Activated naive CD8-positive, alpha-beta T cell treated with anti-CD3 and anti-CD28 coated beads, Interleukin-2, amount 10 ng/mL, durations not matched to agents 7 days and 5 days (primary cell): ENCODE measurements at regions of chr12 and their contacts with region 1.

Region 1: GRCh38 chr12:112906712-112907414 is at the start of gene OAS1:
- DNase-seq: peak; percentile 46
- ATAC-seq: peak; percentile 88
- H3K4me3 Mint-ChIP-seq: peak within 1 kb of the TSS; percentile 98
- H3K27ac Mint-ChIP-seq: peak within 1 kb of the TSS; percentile 99
- H3K4me1 Mint-ChIP-seq: peaks cover 56% of the 10 kb centered on the region
- H3K27me3 Mint-ChIP-seq: no peaks in the 10 kb centered on the region
- total RNA-seq, gene OAS1: 138 to 141 TPM

Region 2: GRCh38 chr12:112828541-112828940 is 78.3 kb before region 1 on chr12:
- POLR2A ChIA-PET with region 1: no interaction called
- DNase-seq: no peak
- ATAC-seq: no peak
- H3K4me3 Mint-ChIP-seq: no peak overlapping the region
- H3K27ac Mint-ChIP-seq: no peak overlapping the region
- H3K4me1 Mint-ChIP-seq: no peaks in the 10 kb centered on the region
- H3K27me3 Mint-ChIP-seq: peaks cover 15% of the 10 kb centered on the region

Region 3: DNA sequence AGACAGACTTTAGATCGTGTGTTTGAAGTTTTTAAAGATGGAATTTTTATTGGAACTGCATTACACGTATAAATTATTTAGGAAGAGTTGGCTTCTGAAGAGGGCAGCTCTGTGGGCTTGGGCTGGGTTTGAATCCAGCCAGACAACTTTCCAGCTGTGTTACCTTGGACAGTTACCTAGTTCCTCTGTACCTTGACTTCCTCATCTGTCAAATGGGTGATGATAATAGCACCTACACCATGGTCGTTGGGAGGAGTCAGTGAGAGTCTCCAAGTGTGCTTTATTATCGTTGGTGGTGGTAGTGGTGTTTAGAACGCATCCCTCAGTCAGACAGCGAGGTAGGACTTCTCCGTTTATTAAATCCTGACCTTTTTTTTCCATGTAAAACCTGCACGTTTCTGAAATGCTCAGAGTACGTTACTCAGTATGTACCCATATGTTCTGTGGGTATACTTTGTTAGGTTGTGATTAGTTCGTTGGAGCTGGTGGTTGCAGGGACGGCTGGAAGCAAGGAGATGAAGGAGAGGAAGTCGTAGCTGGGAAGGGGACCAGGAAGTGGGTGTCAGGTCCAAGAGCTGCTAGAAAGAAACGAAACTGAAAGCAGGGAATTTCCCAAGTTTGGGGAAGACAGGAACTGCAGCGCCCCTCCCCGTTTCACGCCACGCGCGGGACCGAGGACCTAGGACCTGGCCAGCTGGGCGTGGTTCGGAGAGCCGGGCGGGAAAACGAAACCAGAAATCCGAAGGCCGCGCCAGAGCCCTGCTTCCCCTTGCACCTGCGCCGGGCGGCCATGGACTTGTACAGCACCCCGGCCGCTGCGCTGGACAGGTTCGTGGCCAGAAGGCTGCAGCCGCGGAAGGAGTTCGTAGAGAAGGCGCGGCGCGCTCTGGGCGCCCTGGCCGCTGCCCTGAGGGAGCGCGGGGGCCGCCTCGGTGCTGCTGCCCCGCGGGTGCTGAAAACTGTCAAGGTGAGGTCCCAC is 31.2 kb after region 1 on chr12 and contains the start of gene OAS3:
- POLR2A ChIA-PET with region 1: interaction called, 57 read pairs
- DNase-seq: peak; percentile 79
- ATAC-seq: peak; percentile 81
- H3K4me3 Mint-ChIP-seq: peak within 1 kb of the TSS; percentile 85
- H3K27ac Mint-ChIP-seq: peak within 1 kb of the TSS; percentile 95
- H3K4me1 Mint-ChIP-seq: peaks cover 43% of the 10 kb centered on the region
- H3K27me3 Mint-ChIP-seq: no peaks in the 10 kb centered on the region
- total RNA-seq, gene OAS3: 221 to 222 TPM

Region 4: DNA sequence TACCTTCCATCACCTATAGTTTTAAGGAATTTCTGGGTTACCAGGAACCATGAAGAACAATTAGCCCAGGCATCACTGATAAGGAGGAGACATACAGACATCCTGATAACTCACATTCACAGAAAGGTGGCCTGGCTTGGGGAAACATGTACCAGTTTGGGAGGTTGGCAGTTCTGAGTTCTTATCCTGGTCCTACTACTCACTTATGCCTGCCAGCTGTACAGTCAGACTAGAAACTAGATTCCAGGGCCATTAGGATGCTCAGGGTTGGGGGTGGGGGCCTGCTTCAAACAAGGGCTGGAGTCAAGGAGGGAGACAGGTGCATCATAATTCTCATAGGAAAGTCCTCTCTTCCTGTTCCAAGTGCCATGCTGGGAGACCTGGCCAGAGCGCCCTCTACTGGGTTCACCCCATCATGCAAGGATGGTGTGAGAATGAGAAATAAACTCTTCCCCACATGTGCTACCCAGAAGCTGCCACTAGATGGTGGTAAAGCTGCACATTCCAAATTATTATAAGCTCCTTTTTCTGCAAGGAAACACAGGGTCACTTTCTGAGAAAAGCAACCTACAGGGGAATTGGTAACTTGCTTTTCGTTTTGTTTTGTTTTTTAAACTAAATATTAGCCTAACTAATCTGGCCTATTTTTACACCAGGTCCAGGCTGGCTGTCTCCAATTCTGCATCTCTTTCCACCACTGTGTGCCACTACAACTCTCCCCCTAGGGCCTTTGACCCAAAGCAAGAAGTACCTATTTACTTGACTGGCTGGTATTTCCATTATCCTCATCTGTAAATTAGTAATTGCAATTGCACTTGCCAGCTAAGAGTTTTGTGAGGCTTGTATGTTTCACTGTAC is 85.9 kb after region 1 on chr12:
- POLR2A ChIA-PET with region 1: interaction called, 14 read pairs
- DNase-seq: peak; percentile 67
- ATAC-seq: peak; percentile 34
- H3K4me3 Mint-ChIP-seq: no peak overlapping the region
- H3K27ac Mint-ChIP-seq: peak overlapping the region; percentile 28
- H3K4me1 Mint-ChIP-seq: peaks cover 43% of the 10 kb centered on the region
- H3K27me3 Mint-ChIP-seq: no peaks in the 10 kb centered on the region